Head of caudate nucleus (tissue), 42 donors: ENCODE measurements at regions of chr17 and their contacts with region 1.

Region 1: DNA sequence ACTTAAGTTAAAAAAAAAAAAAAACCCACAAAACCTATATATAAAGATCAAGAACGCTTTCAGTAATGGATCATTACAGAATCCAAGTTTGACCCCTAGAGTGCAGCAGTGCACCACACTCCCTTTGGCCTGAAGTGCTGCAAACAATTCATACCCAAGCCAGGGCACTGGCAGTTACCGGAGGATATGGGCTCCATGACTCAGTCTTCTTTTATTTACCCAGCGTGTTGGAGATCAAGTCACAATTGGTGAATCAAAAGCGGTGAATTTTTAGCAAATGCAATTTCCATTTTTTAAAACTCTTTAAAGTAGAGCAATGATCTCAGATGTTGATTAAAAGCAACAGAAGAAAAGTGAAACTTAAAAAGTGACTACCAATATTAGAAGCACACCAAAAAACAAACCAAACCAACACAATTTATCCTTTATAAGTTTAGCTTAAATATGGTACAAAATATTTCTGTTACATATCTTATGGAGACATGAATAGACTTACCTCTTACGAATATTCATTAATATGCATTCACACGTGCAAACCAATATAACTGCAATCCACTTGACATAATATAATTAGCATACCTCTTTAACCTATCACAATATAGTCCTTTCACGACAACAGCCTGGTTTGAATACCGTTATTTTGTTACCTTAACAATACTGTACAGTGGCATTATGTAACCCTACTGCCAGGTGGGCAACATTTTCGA is 46.3 kb downstream of the ZNF652 start:
- DNase-seq: peak; percentile 55 to 95 (median 84)

Region 2: GRCh38 chr17:49361902-49362722 is 46.4 kb after region 1 on chr17 and contains the start of gene ZNF652:
- intact Hi-C with region 1: loop called (anchors 5 kb)
- DNase-seq: peak; percentile 72 to 97 (median 92)

Region 3: DNA sequence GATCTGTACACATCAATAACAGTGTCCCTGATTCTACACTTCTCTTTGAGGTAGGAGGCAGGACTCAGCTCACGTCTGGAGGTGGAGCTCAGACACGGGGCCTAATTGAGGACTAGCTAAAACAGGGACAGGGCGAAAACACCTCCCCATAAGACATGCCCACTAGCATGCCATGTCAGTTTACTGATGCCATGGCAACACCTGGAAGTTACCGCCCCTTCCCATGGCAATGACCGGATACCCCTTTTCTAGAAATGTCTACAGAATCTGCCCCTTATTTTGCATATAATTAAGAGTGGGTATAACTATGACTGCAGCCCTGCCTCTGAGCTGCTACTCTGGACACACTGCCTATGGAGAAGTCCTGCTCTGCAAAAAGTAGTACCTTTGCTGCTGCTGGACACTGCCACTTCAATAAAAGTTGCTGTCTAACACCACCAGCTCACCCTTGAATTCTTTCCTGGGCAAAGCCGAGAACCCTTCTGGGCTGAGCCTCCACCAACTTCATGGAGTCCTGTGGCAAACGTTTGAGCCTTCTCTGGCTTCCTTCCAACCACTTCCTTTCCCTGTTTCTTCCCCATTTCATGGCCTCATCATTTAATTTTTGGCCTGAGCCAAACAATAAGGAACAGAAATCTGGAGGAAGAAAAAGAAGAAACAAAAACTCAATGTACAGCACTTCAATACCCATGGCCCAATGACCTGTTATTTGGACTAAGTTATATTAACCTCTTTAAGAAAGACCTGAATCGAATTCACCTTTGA is 78.0 kb after region 1 on chr17:
- intact Hi-C with region 1: loop called (anchors 2 kb)
- DNase-seq: peak in 1 of 42 donors; percentile 13